ENCODE measurements at regions of chr1 and their contacts with region 1.

Region 1: DNA sequence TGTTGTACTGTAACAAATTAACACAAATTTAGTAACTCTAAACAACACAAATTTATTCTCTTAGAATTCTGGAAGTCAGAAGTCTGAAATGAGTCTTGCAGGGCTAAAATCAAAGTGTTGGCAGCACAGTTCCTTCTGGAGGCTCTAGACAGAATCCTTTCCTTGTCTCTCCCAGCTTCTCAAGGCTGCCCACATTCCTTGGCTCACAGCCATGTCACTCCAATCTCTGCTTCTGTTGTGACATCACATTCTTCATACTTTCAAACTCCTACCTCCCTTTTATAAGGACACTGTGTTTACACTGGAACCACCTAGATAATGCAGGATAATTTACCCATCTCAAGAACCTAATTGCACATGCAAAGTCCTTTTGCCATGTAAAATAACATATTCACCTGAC is 225.0 kb upstream of the PRMT6 start:
- DNase-seq: no peak
- ATAC-seq: no peak
- H3K4me3 ChIP-seq: no peak overlapping the region
- H3K27ac ChIP-seq: no peak overlapping the region
- H3K4me1 ChIP-seq: no peaks in the 10 kb centered on the region
- H3K27me3 ChIP-seq: no peaks in the 10 kb centered on the region
- CTCF ChIP-seq: no peak
- EP300 ChIP-seq: no peak
- POLR2A ChIP-seq: no peak
- RAD21 ChIP-seq: no peak

Region 2: DNA sequence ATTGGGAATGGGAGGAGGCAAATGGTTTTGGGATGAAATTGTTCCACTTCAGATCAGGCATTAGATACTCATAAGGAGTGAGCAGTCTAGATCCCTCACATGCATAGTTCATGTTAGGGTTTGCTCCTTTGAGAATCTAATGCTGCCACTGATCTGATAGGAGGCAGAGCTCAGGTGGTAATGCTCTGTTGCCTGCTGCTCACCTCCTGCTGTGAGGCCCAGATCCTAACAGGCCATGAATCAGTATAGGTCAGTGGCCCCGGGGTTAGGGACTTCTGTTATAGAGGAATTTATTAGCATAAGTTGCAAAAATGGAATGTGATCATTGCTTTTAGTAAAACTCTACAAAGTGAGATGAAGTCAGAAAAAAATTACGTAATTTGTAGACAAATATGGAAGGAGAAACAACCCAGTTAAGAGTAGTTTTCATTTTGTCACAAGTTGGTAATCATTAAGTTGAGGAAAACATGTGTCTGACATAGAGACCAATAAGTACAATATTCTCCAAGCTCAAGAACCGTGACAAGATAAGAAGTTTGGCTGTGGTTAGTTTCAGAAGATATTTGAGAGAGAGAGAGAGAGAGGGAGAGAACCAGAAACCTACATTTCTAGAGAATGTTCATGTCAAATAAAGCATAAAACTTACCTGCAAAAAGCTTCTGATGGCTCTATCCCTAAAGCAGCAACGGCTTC is 464.7 kb before region 1 on chr1:
- CTCF ChIA-PET with region 1: no interaction called
- POLR2A ChIA-PET with region 1: no interaction called
- in situ Hi-C with region 1: no loop called
- intact Hi-C with region 1: loop called (anchors 5 kb)
- DNase-seq: no peak
- ATAC-seq: no peak
- H3K4me3 ChIP-seq: no peak overlapping the region
- H3K27ac ChIP-seq: no peak overlapping the region
- H3K4me1 ChIP-seq: no peaks in the 10 kb centered on the region
- H3K27me3 ChIP-seq: no peaks in the 10 kb centered on the region
- CTCF ChIP-seq: no peak
- EP300 ChIP-seq: no peak
- POLR2A ChIP-seq: no peak
- RAD21 ChIP-seq: no peak

Measured in HepG2 (cell line).